H1 (cell line): ENCODE measurements at regions of chr17 and their contacts with region 1.

Region 1: DNA sequence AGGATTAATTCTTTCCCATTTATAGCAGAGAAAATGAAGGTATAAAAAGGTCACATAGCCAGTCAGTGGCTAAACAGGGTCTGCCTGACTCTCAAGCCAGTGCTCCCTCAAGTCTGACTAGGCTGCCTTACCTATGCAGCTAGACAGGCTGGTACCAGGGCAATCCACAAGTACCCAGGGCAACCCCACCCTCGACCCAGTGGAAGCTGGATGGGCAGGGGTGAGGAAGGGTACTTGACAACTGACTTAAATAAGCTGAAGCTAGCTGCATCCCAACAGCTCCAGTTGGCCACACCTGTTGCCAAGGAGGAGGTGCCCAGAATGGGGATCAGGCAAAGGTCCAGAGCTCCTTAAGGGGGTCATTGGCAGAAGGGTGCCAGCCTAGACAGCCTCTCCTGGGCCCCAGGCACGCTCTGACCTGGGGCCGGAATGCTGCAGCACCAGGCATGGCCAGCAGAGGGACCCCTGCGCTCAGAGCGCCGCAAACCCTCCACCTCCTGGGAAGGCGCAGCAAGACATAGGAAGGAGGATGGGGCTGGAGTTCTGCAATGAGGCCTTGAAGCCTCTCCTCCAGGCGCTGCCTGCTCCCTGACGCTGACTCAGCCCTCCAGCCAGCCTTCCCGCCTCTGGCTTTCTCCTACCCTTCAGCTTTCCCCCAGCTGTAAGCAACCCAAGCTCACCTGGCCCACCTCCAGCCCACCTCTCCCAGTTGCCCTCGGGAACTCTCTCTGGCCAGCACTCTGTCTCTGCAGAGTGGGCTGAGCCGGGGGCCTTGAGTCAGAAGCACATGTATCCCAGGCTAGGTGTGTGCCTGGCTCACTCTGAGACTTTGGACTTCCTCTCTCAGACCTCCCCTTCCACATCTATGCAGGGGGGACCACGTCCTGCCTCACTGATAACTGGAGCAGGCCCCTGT is 28.8 kb downstream of the MPP2 start:
- DNase-seq: peak; percentile 70 to 97
- H3K4me3 ChIP-seq: no peak overlapping the region
- H3K27ac ChIP-seq: no peak overlapping the region
- H3K4me1 ChIP-seq: peaks cover 0 to 8% (median 6%) of the 10 kb centered on the region in 4 experiments; a peak in 5 of 7 replicates
- H3K27me3 ChIP-seq: no peaks in the 10 kb centered on the region
- CTCF ChIP-seq: peak; percentile 93 to 99 (median 97)
- EP300 ChIP-seq: no peak
- POLR2A ChIP-seq: no peak
- RAD21 ChIP-seq: peak; percentile 82 to 88

Region 2: DNA sequence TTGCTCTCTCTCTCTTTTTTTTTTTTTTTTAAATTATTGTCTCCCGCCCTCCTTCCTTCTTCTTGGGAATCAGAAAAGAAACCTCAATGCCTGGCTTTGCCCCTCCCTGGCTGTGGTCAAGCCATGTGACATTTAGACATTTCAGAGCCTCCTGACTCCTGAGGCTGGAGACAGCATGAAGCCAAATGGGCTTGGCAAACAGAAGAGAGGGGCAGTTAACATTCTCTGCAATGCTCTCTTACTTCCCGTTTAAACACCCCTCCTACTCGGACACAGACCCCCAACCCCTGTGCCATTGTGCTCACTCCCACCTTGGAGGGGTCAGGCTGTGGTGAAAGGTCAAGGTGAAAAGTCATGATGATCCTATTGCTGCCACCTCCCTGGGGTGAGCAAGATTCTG is 202.0 kb before region 1 on chr17:
- CTCF ChIA-PET with region 1: no interaction called
- POLR2A ChIA-PET with region 1: no interaction called
- DNase-seq: no peak
- H3K4me3 ChIP-seq: no peak overlapping the region
- H3K27ac ChIP-seq: no peak overlapping the region
- H3K4me1 ChIP-seq: peaks cover 0 to 22% (median 9%) of the 10 kb centered on the region in 4 experiments; a peak in 6 of 7 replicates
- H3K27me3 ChIP-seq: 0 out of 7 replicates have a peak, but pooled peaks cover 0 to 2% (median 0%) of the 10 kb centered on the region in 4 experiments
- CTCF ChIP-seq: no peak
- EP300 ChIP-seq: no peak
- POLR2A ChIP-seq: no peak
- RAD21 ChIP-seq: no peak

Region 3: GRCh38 chr17:43840814-43841213 is 37.7 kb before region 1 on chr17:
- CTCF ChIA-PET with region 1: interaction called, 33 read pairs
- POLR2A ChIA-PET with region 1: no interaction called
- DNase-seq: no peak
- H3K4me3 ChIP-seq: no peak overlapping the region
- H3K27ac ChIP-seq: no peak overlapping the region
- H3K4me1 ChIP-seq: no peaks in the 10 kb centered on the region
- H3K27me3 ChIP-seq: peaks cover 0 to 1% (median 0%) of the 10 kb centered on the region in 4 experiments; a peak in 2 of 7 replicates
- CTCF ChIP-seq: peak; percentile 26 to 63 (median 52)
- EP300 ChIP-seq: no peak
- POLR2A ChIP-seq: no peak
- RAD21 ChIP-seq: peak; percentile 39 to 56

Region 4: DNA sequence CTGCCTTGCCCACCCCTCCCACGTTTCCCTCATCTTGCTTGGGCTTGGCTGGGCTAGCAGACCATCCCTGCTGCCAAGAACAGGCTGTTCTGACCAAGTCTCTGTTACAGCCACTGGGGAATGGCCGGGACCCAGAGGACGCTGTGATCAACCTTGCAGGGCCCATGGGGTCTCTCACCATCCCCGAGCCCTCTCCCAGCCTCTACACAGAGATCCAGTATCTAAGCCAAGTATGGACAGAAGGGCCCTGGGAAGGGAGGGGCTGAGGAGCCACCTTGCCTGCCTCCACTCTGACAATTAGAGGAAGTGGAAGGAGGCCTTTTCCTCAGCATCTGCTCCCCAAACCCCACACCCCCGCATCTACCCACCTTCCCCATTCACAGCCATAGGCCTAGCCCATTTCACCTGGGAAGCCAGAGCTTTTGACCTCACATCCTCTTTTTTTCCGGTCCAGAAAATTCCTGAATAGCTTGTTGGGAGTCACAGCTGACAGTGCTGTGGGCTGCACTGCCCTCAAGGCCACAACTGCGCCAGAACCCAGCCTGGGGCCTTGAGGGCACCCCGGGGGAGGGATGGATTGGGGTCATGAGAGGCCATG is 17.4 kb before region 1 on chr17:
- CTCF ChIA-PET with region 1: interaction called, 61 read pairs
- POLR2A ChIA-PET with region 1: interaction called, 4 read pairs
- DNase-seq: no peak
- H3K4me3 ChIP-seq: no peak overlapping the region
- H3K27ac ChIP-seq: no peak overlapping the region
- H3K4me1 ChIP-seq: peaks cover 0 to 4% (median under 1%) of the 10 kb centered on the region in 4 experiments; a peak in 3 of 7 replicates
- H3K27me3 ChIP-seq: no peaks in the 10 kb centered on the region
- CTCF ChIP-seq: no peak
- EP300 ChIP-seq: no peak
- POLR2A ChIP-seq: no peak
- RAD21 ChIP-seq: no peak

Region 5: DNA sequence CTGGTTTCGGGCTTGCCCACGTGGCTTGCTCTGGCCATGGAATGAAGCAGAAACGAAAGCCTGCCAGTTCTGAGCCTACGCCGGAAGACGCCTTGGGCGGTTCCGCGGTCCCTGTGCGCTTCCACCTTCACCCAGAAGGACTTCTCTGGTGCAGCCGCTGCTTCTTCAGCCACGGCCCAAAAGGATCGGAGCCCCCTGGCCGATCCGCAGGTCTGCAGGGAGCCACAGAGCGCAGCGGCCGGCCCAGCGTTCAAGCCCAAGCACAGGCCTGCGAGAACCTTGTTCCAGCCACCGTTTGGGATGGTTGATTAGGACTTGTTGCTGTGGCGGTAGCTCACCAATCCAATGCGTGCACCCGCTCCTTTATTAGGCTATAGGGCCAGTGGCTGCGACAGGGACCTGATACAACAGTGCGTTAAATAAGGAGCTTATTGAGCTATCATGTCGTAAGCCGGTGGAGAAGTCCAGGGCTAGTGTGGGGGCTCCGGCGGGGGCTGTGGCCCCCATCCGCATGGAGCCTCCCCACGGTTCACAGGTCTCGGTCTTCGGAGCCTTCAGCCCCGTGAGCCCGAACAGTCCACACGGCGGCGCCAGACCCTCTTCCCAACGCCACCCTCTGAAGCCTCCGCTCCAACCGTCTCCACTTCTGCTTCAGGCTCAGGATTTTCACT is 39.0 kb after region 1 on chr17:
- CTCF ChIA-PET with region 1: interaction called, 403 read pairs
- POLR2A ChIA-PET with region 1: no interaction called
- DNase-seq: peak in 1 of 2 experiments; percentile 84
- H3K4me3 ChIP-seq: peak overlapping the region; percentile 16 to 52 (median 26); a peak in 5 of 8 replicates
- H3K27ac ChIP-seq: no peak overlapping the region
- H3K4me1 ChIP-seq: peaks cover 0 to 8% (median 6%) of the 10 kb centered on the region in 4 experiments; a peak in 5 of 7 replicates
- H3K27me3 ChIP-seq: peaks cover 0 to 9% (median 7%) of the 10 kb centered on the region in 4 experiments; a peak in 5 of 7 replicates
- CTCF ChIP-seq: peak; percentile 74 to 81 (median 79)
- EP300 ChIP-seq: no peak
- POLR2A ChIP-seq: no peak; a peak in 1 of 3 replicates
- RAD21 ChIP-seq: peak; percentile 57 to 68

Region 6: DNA sequence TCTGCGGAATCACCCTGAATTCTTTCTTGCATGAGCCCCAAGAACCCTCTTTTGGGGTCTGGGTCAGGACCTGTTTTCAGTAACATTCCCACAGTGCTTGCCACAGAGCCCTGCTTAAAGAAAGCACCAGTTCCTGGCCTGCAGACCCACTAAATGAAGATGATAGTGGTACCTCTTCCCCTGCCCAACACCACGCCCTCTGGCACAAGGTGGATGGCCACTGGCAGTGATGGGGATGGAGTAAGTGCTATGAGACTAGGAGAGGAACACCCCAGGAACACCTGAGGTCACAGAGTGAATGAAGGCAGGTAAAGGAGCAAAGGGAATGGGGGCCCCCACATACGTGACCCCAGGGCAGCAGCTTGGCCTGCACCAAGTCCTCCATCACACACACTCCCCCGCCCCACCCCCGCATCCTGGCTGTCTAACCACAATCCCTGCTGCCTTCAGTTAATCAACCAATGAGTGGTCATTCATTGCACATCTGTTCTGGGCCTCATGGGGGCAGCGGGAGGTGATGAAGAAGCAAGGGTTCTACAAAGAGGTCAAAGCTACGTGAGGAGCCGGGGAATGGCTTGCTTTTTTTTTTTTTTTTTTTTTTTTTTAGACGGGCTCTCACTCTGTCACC is 67.7 kb after region 1 on chr17:
- CTCF ChIA-PET with region 1: interaction called, 33 read pairs
- POLR2A ChIA-PET with region 1: no interaction called
- DNase-seq: no peak
- H3K4me3 ChIP-seq: no peak overlapping the region
- H3K27ac ChIP-seq: no peak overlapping the region
- H3K4me1 ChIP-seq: peaks cover 0 to 2% (median 0%) of the 10 kb centered on the region in 4 experiments; a peak in 2 of 7 replicates
- H3K27me3 ChIP-seq: no peaks in the 10 kb centered on the region; a peak in 2 of 7 replicates
- CTCF ChIP-seq: peak; percentile 22 to 29 (median 24); a peak in 3 of 4 replicates
- EP300 ChIP-seq: no peak
- POLR2A ChIP-seq: no peak
- RAD21 ChIP-seq: peak; percentile 21 to 46; a peak in 2 of 4 replicates